Activated T-helper 1 cell treated with anti-CD3 and anti-CD28 coated beads, Interleukin-12 subunit alpha, Interleukin-12 subunit beta, Interleukin-2, Interleukin-4 antibody, amounts not matched to agents 30 ng/mL and 10 ng/mL and 1 ng/mL, durations not matched to agents 14 hours and 24 hours and 36 hours (primary cell): ENCODE measurements at regions of chr16 and their contacts with region 1.

Region 1: DNA sequence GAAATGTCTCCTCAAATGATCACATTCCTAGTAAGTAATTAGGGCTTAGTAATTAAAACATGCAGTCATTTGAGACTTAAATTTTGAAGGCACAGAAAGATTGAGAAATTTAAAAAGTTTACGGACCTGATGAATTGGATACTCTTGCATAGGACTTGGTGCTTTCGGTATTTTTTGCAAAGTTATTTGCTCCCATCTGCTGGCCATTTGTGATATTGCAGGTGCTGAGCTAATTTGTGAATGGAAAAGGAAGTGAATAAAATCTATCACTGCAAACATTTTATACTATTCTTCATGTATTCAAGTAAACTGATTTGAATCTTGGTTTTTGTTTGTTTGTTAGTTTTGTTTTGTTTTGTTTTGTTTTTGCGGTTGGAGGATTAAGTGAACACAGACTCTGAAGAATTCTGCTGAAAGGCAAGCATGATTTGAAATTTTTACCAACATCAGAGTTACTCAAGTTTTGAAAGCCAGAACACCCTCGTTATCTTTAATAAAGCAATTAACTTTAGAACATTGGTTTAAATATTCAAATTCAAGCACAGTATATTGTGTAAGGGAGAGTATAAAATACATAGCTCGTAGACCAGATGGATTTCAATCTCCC is 689.5 kb upstream of the RBFOX1 start:
- DNase-seq: peak; percentile 4
- H3K4me3 Mint-ChIP-seq: no peak overlapping the region
- H3K27ac Mint-ChIP-seq: no peak overlapping the region
- H3K4me1 Mint-ChIP-seq: peaks cover 5% of the 10 kb centered on the region
- H3K27me3 Mint-ChIP-seq: no peaks in the 10 kb centered on the region

Region 2: DNA sequence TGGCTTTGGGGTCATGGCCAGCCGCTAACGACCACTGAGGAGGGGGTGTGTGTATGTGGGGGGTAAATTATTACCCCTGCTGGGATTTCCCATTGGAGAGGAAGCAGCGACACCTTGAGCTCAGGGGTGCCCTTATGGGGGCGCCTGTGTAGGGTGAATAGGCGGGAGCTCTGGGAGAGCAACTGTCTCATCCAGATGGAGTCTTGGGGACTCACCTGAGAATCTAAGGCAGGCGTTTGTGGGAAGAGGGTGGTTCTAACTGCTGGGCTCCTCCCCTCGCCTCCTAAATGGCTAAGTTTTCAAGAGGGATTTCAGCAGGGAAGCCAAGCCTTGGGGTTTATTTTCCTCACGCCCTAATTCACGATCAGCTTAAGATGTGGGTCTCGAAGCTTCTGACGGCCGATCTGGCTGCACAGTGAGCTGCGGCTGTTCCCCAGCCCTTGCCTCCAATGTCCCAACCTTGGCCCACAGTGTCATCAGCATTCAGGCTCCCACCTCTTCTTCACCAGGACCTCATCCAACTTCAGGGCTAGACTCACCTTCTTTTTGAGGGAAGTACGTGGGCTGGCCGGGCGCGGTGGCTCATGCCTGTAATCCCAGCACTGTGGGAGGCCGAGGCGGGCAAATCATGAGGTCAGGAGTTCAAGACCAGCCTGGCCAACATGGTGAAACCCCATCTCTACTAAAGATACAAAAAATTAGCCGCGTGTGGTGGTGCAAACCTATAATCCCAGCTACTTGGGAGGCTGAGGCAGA is 1408.7 kb before region 1 on chr16:
- intact Hi-C with region 1: loop called (anchors 10 kb)
- DNase-seq: no peak
- H3K4me3 Mint-ChIP-seq: no peak overlapping the region
- H3K27ac Mint-ChIP-seq: no peak overlapping the region
- H3K4me1 Mint-ChIP-seq: peaks cover 9% of the 10 kb centered on the region
- H3K27me3 Mint-ChIP-seq: peaks cover 3% of the 10 kb centered on the region

Region 3: GRCh38 chr16:6016530-6017184 is 626.5 kb before region 1 on chr16:
- intact Hi-C with region 1: loop called (anchors 2 kb)
- DNase-seq: no peak
- H3K4me3 Mint-ChIP-seq: no peak overlapping the region
- H3K27ac Mint-ChIP-seq: no peak overlapping the region
- H3K4me1 Mint-ChIP-seq: no peaks in the 10 kb centered on the region
- H3K27me3 Mint-ChIP-seq: peaks cover 7% of the 10 kb centered on the region

Region 4: DNA sequence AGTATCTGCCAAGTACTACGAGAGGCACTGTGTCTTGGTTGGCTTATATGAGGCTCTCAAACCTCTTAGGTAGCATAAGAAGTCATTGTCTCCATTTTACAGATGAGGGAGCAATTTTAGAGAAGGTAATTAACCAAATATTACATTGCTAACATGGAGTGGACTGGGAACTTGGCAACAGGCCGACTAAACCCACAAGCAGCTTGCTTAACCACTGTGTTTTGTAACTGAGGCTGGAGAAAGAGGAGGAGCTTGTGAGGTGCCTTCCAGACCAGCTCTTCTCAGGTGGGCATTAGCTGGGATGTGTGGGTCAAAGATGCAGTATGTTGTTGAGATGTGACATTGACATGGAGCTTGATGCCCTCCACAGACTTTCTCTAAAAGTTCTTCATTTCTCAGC is 146.2 kb before region 1 on chr16:
- intact Hi-C with region 1: no loop called
- DNase-seq: no peak
- H3K4me3 Mint-ChIP-seq: no peak overlapping the region
- H3K27ac Mint-ChIP-seq: no peak overlapping the region
- H3K4me1 Mint-ChIP-seq: no peaks in the 10 kb centered on the region
- H3K27me3 Mint-ChIP-seq: no peaks in the 10 kb centered on the region